Posterior vena cava (tissue), 2 donors: ENCODE measurements at regions of chr11 and their contacts with region 1.

Region 1: GRCh38 chr11:111479666-111480065 is 32.5 kb downstream of the BTG4 start:
- DNase-seq: no peak

Region 2: GRCh38 chr11:111417766-111418435 is 61.8 kb before region 1 on chr11:
- intact Hi-C with region 1: no loop called
- DNase-seq: no peak

Region 3: GRCh38 chr11:113334183-113334582 is 1854.5 kb after region 1 on chr11:
- intact Hi-C with region 1: loop called in 1 of 2 experiments (anchors 10 kb)
- DNase-seq: no peak